ENCODE measurements at regions of chr14 and their contacts with region 1.

Region 1: DNA sequence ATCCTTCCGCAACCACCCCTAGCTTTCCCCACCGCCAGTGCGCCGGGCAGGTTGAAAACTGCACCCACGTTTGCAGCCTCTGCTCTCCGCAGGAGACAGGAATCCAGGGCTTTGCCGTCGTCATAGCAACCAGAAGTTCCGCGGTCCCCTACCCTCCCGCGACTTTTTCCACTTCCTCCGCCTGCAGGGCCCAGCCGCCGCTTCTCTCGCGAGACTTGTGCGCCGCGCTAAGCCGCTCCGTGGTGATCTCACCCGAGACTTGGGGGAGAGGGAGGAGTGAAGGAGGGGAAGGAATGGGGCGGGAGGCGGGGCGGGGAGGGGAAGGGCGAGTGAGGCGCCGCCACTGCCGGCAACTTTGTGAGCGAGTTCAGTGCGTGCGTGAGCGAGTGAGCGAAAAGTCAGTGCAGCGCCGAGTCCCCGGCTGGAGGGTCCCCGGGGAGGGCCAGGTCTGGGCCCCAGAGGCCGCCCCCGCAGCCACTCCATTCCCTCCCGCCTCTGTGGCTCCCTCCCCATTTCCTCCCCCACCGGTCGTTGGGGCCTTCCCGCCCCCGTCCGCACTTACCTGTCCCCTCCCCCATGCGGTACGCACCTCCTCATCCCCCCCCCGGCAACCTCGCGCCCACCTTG is 413.0 kb downstream of the PCNX1 start:
- DNase-seq: peak; percentile 99
- H3K4me3 ChIP-seq: peak within 1 kb of the TSS; percentile 90 to 97 (median 96)
- H3K27ac ChIP-seq: peak within 1 kb of the TSS; percentile 98 to 100 (median 99)
- H3K4me1 ChIP-seq: peaks cover 0 to 38% (median 25%) of the 10 kb centered on the region in 4 donors
- H3K27me3 ChIP-seq: no peaks in the 10 kb centered on the region
- CTCF ChIP-seq: no peak
- EP300 ChIP-seq: no peak
- POLR2A ChIP-seq: peak; percentile 88 to 89

Region 2: GRCh38 chr14:71187647-71188356 is 132.4 kb before region 1 on chr14:
- intact Hi-C with region 1: no loop called
- DNase-seq: no peak
- H3K4me3 ChIP-seq: no peak overlapping the region
- H3K27ac ChIP-seq: no peak overlapping the region
- H3K4me1 ChIP-seq: no peaks in the 10 kb centered on the region
- H3K27me3 ChIP-seq: no peaks in the 10 kb centered on the region
- CTCF ChIP-seq: no peak
- EP300 ChIP-seq: no peak
- POLR2A ChIP-seq: no peak

Region 3: DNA sequence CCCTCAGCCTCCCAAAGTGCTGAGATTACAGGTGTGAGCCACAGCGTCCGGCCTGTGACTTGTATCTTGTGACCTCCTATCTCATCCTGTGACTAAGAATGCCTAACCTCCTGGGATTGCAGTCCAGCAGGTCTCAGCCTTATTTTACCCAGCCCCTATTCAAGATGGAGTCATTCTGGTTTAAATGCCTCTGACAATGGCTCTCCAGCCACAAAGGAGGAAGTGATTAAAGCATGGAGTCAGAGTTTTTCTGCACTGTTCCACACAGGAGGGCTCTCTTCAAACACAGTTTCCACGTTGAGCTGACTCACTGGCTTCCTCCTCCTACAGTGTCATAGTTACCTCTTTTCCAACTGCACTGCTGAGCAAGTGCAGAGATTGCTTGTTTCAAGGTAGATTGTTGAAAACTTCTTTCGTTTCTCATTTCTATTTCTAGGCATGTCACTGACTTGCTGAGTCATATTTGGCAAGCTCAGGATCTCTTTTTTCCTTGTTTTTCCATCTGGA is 29.2 kb before region 1 on chr14:
- intact Hi-C with region 1: no loop called
- DNase-seq: no peak
- H3K4me3 ChIP-seq: no peak overlapping the region
- H3K27ac ChIP-seq: peak overlapping the region in 1 of 4 donors; percentile 23
- H3K4me1 ChIP-seq: peaks cover 0 to 8% (median 3%) of the 10 kb centered on the region in 4 donors
- H3K27me3 ChIP-seq: no peaks in the 10 kb centered on the region
- CTCF ChIP-seq: no peak
- EP300 ChIP-seq: no peak
- POLR2A ChIP-seq: no peak

Region 4: GRCh38 chr14:71358209-71358931 is 38.1 kb after region 1 on chr14:
- intact Hi-C with region 1: loop called (anchors 2 kb)
- DNase-seq: no peak
- H3K4me3 ChIP-seq: no peak overlapping the region
- H3K27ac ChIP-seq: peak overlapping the region; percentile 62 to 80 (median 72)
- H3K4me1 ChIP-seq: peaks cover 0 to 88% (median 61%) of the 10 kb centered on the region in 4 donors
- H3K27me3 ChIP-seq: no peaks in the 10 kb centered on the region
- CTCF ChIP-seq: no peak
- EP300 ChIP-seq: peak in 1 of 4 donors; percentile 48
- POLR2A ChIP-seq: no peak

Region 5: GRCh38 chr14:71586131-71586897 is 266.1 kb after region 1 on chr14:
- intact Hi-C with region 1: loop called (anchors 5 kb)
- DNase-seq: no peak
- H3K4me3 ChIP-seq: peak overlapping the region; percentile 14 to 47 (median 34)
- H3K27ac ChIP-seq: peak overlapping the region; percentile 45 to 76 (median 60)
- H3K4me1 ChIP-seq: peaks cover 0 to 38% (median 23%) of the 10 kb centered on the region in 4 donors
- H3K27me3 ChIP-seq: no peaks in the 10 kb centered on the region
- CTCF ChIP-seq: no peak
- EP300 ChIP-seq: no peak
- POLR2A ChIP-seq: no peak

Region 6: GRCh38 chr14:71651228-71651627 is 331.0 kb after region 1 on chr14:
- intact Hi-C with region 1: no loop called
- DNase-seq: no peak
- H3K4me3 ChIP-seq: no peak overlapping the region
- H3K27ac ChIP-seq: peak overlapping the region in 3 of 4 donors; percentile 27 to 50 (median 41)
- H3K4me1 ChIP-seq: peaks cover 0 to 16% (median 13%) of the 10 kb centered on the region in 4 donors
- H3K27me3 ChIP-seq: no peaks in the 10 kb centered on the region
- CTCF ChIP-seq: no peak
- EP300 ChIP-seq: no peak
- POLR2A ChIP-seq: no peak

Region 7: DNA sequence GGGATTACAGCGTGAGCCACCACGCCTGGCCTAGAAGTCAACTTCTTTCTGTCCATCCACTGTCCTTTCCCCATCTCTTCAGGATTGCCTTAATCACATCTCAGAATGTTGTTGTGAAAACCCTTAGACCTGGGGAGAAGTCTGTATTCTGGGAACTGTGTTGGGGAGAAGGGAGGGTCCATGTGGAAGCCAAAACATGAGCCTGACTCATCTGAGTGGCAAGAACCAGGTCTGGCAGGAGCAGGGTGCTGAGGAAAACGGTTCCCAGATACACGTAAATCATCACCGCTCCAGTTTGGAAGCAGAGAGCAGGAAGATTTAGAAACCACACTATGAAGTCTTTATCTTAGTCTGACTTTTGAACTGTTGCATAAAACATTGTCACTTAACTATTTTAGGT is 366.5 kb after region 1 on chr14:
- intact Hi-C with region 1: loop called (anchors 2 kb)
- DNase-seq: peak; percentile 78
- H3K4me3 ChIP-seq: no peak overlapping the region
- H3K27ac ChIP-seq: peak overlapping the region; percentile 44 to 81 (median 71)
- H3K4me1 ChIP-seq: peaks cover 0 to 54% (median 35%) of the 10 kb centered on the region in 4 donors
- H3K27me3 ChIP-seq: no peaks in the 10 kb centered on the region
- CTCF ChIP-seq: no peak
- EP300 ChIP-seq: no peak
- POLR2A ChIP-seq: no peak

Region 8: DNA sequence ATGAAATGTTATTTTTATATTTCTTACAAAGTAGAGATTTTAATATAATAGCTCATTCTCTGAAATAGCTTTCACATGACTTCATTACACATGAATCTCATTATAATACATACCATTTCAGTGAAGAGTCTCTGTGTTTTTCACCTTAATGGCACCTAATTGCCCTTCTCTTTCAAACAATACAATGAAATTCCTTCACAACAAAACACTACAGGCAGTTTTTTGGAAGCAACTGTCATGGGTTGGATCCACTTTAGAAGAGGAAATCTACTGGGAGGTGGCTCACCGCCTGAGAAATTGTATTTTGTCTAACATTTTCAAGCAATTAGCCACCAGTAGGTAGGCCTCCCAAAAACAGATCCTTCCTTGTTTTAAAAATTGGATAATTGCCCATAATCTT is 571.8 kb after region 1 on chr14:
- intact Hi-C with region 1: no loop called
- DNase-seq: no peak
- H3K4me3 ChIP-seq: no peak overlapping the region
- H3K27ac ChIP-seq: no peak overlapping the region
- H3K4me1 ChIP-seq: no peaks in the 10 kb centered on the region
- H3K27me3 ChIP-seq: no peaks in the 10 kb centered on the region
- CTCF ChIP-seq: no peak
- EP300 ChIP-seq: no peak
- POLR2A ChIP-seq: no peak